Endothelial cell of umbilical vein (primary cell): ENCODE measurements at regions of chr12 and their contacts with region 1.

Region 1: DNA sequence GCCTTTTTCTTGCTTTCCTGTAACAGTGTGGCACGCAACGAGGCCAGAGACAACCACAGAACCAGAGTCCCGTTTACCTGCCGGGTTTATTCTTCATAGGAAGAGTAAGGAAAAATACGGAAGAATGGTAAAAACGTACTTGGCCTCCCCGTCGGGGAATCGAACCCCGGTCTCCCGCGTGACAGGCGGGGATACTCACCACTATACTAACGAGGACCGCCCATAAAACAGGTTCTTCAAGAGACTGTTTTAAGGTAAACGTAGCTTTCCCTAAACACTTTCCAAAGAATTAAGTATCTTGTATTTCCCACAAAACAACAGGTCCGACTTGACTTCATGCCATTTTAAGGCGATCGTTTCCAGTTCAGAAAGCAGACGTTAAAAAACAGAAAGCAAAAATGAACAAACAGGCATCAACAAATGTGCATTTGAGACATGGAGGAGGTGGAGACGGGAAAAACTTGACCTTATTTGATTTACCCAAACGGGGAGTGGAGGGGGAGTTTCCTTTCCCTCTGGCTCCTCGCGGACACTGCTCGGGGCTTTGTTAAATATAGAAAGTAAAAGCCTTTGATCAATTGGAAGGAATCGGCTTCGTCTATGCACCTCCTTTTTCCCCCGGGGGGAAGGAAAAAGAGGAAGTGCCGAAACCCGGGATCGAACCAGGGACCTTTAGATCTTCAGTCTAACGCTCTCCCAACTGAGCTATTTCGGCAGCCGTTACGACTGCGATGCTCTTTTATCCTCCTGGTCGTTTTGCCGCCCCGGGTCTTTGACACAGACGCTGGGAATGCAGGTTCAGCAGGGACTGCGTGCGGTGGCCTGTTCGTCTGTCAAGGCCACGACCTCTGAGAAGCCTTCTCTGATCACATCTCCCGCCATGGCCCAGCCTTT is 13.0 kb upstream of the UBC start:
- DNase-seq: peak; percentile 95
- H3K4me3 ChIP-seq: peak overlapping the region; percentile 55 to 85 (median 74)
- H3K27ac ChIP-seq: peak overlapping the region; percentile 93
- H3K4me1 ChIP-seq: peaks cover 14% of the 10 kb centered on the region
- H3K27me3 ChIP-seq: no peaks in the 10 kb centered on the region
- CTCF ChIP-seq: no peak
- POLR2A ChIP-seq: peak; percentile 21

Region 2: GRCh38 chr12:124863416-124864325 is 63.8 kb before region 1 on chr12 and contains the start of gene SCARB1:
- CTCF ChIA-PET with region 1: no interaction called
- POLR2A ChIA-PET with region 1: no interaction called
- dilution Hi-C with region 1: no loop called
- intact Hi-C with region 1: no loop called
- DNase-seq: peak; percentile 71
- H3K4me3 ChIP-seq: peak within 1 kb of the TSS; percentile 16 to 73 (median 30)
- H3K27ac ChIP-seq: peak within 1 kb of the TSS; percentile 58
- H3K4me1 ChIP-seq: peaks cover 24% of the 10 kb centered on the region
- H3K27me3 ChIP-seq: no peaks in the 10 kb centered on the region
- CTCF ChIP-seq: peak in 1 of 2 donors; percentile 3
- POLR2A ChIP-seq: peak; percentile 82
- total RNA-seq, gene SCARB1: 125 TPM in 2 replicates

Region 3: DNA sequence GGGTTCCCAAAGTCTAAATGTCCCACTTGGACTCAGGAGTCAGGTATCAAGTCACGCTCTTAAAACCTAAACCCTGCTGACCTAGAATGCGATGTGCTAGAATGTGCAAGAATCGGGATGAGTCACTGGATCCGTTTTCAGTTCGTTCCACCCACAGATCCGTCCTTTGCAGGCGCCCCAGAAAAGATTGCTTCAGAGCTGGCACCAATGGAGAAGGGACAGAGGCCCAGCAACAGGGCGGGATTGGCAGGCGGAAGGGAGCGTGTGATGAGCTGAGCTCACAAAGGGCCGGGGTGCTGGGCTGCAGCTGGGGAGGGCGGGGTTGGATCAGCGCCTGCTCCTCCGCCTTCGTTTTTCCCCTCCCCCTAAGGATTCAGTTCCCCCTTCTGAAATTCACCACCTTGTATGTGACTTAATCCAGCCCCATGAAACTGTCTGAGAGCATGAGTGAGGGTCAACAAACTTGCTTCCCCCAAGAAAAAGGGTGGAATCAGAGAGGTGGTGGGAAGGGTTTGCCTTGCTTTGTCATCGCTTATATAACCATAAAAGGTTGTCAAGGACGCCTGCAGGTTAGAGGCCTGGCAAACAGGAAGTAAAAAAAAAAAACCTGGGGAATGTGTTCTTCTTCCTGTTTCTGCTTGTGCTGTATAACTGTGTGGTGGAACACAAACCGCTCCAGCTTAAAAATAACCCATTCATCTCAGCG is 10.2 kb before region 1 on chr12:
- CTCF ChIA-PET with region 1: interaction called, 7 read pairs
- POLR2A ChIA-PET with region 1: interaction called, 26 read pairs
- dilution Hi-C with region 1: no loop called
- intact Hi-C with region 1: loop called (anchors 1 kb)
- DNase-seq: peak; percentile 100
- H3K4me3 ChIP-seq: peak overlapping the region; percentile 7 to 63 (median 21)
- H3K27ac ChIP-seq: peak overlapping the region; percentile 95
- H3K4me1 ChIP-seq: peaks cover 58% of the 10 kb centered on the region
- H3K27me3 ChIP-seq: no peaks in the 10 kb centered on the region
- CTCF ChIP-seq: no peak
- POLR2A ChIP-seq: no peak